Ascending aorta (tissue), 2 donors: ENCODE measurements at regions of chr12 and their contacts with region 1.

Region 1: GRCh38 chr12:20369305-20370005 is 1.1 kb downstream of the PDE3A start:
- DNase-seq: peak in 1 of 2 donors; percentile 89
- H3K4me3 ChIP-seq: peak overlapping the region; percentile 63 to 94
- H3K27ac ChIP-seq: peak overlapping the region; percentile 92 to 98
- H3K4me1 ChIP-seq: no peaks in the 10 kb centered on the region
- H3K27me3 ChIP-seq: no peaks in the 10 kb centered on the region
- CTCF ChIP-seq: peak; percentile 25 to 35 (median 35)

Region 2: DNA sequence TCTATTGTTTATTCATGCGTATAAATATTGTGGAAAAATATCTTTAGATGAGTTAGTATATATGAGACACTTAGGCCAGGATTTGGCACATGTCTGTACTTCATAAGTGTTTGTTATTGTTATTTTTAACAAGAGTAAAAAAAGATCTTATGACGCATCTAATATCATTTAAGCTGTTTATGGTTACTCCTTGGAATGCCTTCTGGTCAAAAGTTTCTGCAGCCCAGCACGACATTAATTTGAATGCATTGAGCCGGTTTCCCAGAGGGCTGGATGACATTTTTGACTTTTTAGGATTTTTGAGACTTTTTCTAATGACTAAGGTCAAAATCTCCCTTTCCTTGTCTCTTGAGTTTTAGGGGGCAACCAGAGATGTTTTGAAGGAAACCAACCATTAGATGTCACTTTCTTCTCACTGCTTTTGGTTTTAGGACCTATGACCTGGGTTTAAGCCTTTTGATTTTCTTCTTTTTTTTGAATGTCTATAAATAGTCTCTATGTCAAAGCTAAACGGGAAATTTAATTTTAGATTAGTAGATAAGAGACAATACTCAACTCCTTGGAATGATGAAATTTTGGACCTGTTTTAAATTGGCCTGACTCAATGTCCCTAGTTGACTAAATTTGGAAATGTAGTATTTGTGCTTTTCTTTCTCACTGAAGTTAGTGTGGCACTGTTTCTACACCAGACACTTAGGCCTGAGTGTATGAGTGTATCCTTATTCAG is 714.6 kb before region 1 on chr12:
- intact Hi-C with region 1: loop called (anchors 10 kb)
- DNase-seq: no peak
- H3K4me3 ChIP-seq: no peak overlapping the region
- H3K27ac ChIP-seq: peak overlapping the region; percentile 95 to 97
- H3K4me1 ChIP-seq: peaks cover 12 to 24% of the 10 kb centered on the region in 2 donors
- H3K27me3 ChIP-seq: no peaks in the 10 kb centered on the region
- CTCF ChIP-seq: peak in 2 of 3 experiments; percentile 44 to 53

Region 3: GRCh38 chr12:19915392-19916195 is 453.9 kb before region 1 on chr12:
- intact Hi-C with region 1: loop called (anchors 10 kb)
- DNase-seq: no peak
- H3K4me3 ChIP-seq: no peak overlapping the region
- H3K27ac ChIP-seq: peak overlapping the region; percentile 7 to 47
- H3K4me1 ChIP-seq: peaks cover 0 to 35% of the 10 kb centered on the region in 2 donors
- H3K27me3 ChIP-seq: no peaks in the 10 kb centered on the region
- CTCF ChIP-seq: peak; percentile 54 to 57 (median 56)

Region 4: GRCh38 chr12:20212658-20213555 is 156.5 kb before region 1 on chr12:
- intact Hi-C with region 1: loop called (anchors 5 kb)
- DNase-seq: peak; percentile 75 to 93
- H3K4me3 ChIP-seq: peak overlapping the region; percentile 32 to 35
- H3K27ac ChIP-seq: peak overlapping the region; percentile 72
- H3K4me1 ChIP-seq: peaks cover 0 to 20% of the 10 kb centered on the region in 2 donors
- H3K27me3 ChIP-seq: no peaks in the 10 kb centered on the region
- CTCF ChIP-seq: no peak

Region 5: GRCh38 chr12:20549107-20549719 is 179.8 kb after region 1 on chr12:
- intact Hi-C with region 1: loop called (anchors 5 kb)
- DNase-seq: no peak
- H3K4me3 ChIP-seq: peak overlapping the region in 1 of 2 donors; percentile 43
- H3K27ac ChIP-seq: peak overlapping the region in 1 of 2 donors; percentile 66
- H3K4me1 ChIP-seq: peaks cover 0 to 14% of the 10 kb centered on the region in 2 donors
- H3K27me3 ChIP-seq: no peaks in the 10 kb centered on the region
- CTCF ChIP-seq: peak; percentile 55 to 65 (median 56)